Spleen (tissue), 13 donors: ENCODE measurements at regions of chr9 and their contacts with region 1.

Region 1: DNA sequence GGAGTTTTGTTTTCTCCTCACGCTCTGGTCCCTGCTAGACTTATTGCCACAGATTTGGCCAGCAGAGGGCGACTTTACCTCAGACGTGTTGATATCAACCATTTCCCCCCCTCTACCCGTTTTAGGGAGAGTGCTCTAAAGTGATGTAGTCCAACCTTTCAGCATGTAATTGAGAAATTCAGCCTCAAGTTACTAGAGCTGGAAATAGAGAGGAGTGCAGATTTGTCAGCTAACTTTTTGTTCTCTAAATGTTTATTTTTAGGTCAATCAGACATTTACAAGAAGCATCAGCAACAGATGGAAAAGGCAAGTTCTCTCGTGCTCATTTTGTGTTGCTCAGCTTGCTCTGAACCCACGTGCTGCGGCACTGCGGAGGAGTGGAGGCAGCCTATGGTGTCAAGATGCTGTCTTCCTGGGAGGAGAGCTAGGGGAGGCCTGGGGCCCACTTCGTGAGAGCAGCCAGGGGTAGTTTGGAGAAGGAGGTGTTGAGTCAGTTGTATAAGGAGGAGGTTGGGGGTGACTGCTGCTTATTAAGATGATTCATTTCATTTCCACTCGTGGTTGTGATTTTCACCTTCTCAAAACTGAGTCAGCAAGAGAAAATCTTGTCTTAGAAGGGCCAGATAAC is 53.6 kb downstream of the GPR107 start:
- DNase-seq: peak; percentile 91
- H3K4me3 ChIP-seq: no peak overlapping the region
- H3K27ac ChIP-seq: no peak overlapping the region
- H3K4me1 ChIP-seq: peaks cover 0 to 24% (median 4%) of the 10 kb centered on the region in 6 donors
- H3K27me3 ChIP-seq: no peaks in the 10 kb centered on the region
- CTCF ChIP-seq: peak; percentile 72 to 89 (median 83)
- POLR2A ChIP-seq: peak in 1 of 3 donors; percentile 17

Region 2: GRCh38 chr9:130235897-130236668 is 128.7 kb after region 1 on chr9:
- intact Hi-C with region 1: loop called (anchors 2 kb)
- DNase-seq: peak; percentile 92
- H3K4me3 ChIP-seq: peak overlapping the region in 1 of 8 donors; percentile 11
- H3K27ac ChIP-seq: no peak overlapping the region
- H3K4me1 ChIP-seq: peaks cover 10 to 32% (median 25%) of the 10 kb centered on the region in 6 donors
- H3K27me3 ChIP-seq: peaks cover 0 to 19% (median 0%) of the 10 kb centered on the region in 7 donors
- CTCF ChIP-seq: peak; percentile 92 to 99 (median 95)
- POLR2A ChIP-seq: no peak